ENCODE measurements at regions of chr6 and their contacts with region 1.

Region 1: DNA sequence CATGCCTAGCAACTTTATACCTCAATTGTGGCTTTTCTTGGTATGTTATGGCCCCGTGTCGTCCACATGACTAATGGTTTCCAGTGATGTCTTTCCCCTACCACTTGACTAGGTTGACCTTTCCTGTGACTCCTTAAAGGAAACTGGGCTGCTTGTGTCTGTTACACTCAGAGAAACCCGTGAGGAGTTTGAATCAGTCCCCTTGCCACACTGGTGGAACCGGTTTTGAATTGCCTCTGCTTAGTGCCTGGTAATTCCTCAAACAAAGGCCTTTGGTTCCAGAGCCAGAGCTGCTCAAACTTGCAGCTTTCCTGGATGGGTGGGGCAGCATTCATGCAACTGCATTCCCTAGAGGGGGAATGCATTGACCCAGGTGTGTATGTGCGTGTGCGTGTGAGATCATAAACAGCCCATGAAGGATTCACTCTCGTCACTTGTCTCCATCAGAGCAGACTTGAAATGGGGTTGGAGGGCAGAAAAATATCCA is 22.0 kb downstream of the ECT2L start:
- DNase-seq: no peak
- ATAC-seq: peak in 2 of 8 donors; percentile 27 to 43
- H3K4me3 ChIP-seq: no peak overlapping the region
- H3K27ac ChIP-seq: no peak overlapping the region
- H3K4me1 ChIP-seq: peaks cover 0 to 17% (median 0%) of the 10 kb centered on the region in 9 donors
- H3K27me3 ChIP-seq: no peaks in the 10 kb centered on the region
- CTCF ChIP-seq: no peak

Region 2: GRCh38 chr6:138863321-138863720 is 45.5 kb after region 1 on chr6:
- intact Hi-C with region 1: loop called in 1 of 10 experiments (anchors 1 kb)
- DNase-seq: peak; percentile 13 to 41
- ATAC-seq: peak; percentile 72 to 95 (median 84)
- H3K4me3 ChIP-seq: no peak overlapping the region
- H3K27ac ChIP-seq: peak overlapping the region; percentile 60 to 90 (median 78)
- H3K4me1 ChIP-seq: peaks cover 0 to 25% (median 13%) of the 10 kb centered on the region in 9 donors
- H3K27me3 ChIP-seq: no peaks in the 10 kb centered on the region
- CTCF ChIP-seq: no peak

Region 3: GRCh38 chr6:138987640-138988468 is 170.0 kb after region 1 on chr6 and contains the start of gene REPS1:
- intact Hi-C with region 1: loop called in 9 of 10 experiments (anchors 1 to 5 kb)
- DNase-seq: peak; percentile 92 to 93
- ATAC-seq: peak; percentile 98
- H3K4me3 ChIP-seq: peak within 1 kb of the TSS; percentile 64 to 97 (median 92)
- H3K27ac ChIP-seq: peak within 1 kb of the TSS; percentile 79 to 97 (median 94)
- H3K4me1 ChIP-seq: peaks cover 0 to 49% (median 38%) of the 10 kb centered on the region in 9 donors
- H3K27me3 ChIP-seq: no peaks in the 10 kb centered on the region
- CTCF ChIP-seq: peak; percentile 97 to 100 (median 99)
- total RNA-seq, gene REPS1: 30.2 to 43.9 (median 39.4) TPM

Region 4: DNA sequence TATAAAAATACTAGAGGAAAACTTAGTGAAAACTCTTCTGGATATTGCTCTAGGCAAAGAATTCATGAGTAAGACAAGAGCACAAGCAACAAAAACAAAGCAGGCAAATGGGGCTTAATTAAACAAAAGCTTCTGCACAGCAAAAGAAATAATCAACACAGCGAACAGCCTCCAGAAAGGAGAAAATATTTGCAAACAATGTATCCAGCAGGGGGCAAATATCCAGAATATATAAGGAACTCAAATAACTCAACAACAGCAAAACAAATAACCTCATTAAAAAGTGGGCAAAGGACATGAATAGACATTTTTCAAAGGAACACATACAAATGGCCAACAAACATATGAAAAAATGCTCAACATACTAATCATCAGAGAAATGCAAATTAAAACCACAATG is 299.9 kb after region 1 on chr6:
- intact Hi-C with region 1: loop called in 4 of 10 experiments (anchors 5 to 10 kb)
- DNase-seq: no peak
- ATAC-seq: no peak
- H3K4me3 ChIP-seq: no peak overlapping the region
- H3K27ac ChIP-seq: no peak overlapping the region
- H3K4me1 ChIP-seq: no peaks in the 10 kb centered on the region
- H3K27me3 ChIP-seq: no peaks in the 10 kb centered on the region
- CTCF ChIP-seq: no peak

Region 5: GRCh38 chr6:139369568-139370282 is 551.9 kb after region 1 on chr6:
- intact Hi-C with region 1: loop called in 9 of 10 experiments (anchors 2 to 10 kb)
- DNase-seq: no peak
- ATAC-seq: no peak
- H3K4me3 ChIP-seq: peak overlapping the region in 7 of 10 donors; percentile 0 to 97 (median 79)
- H3K27ac ChIP-seq: peak overlapping the region; percentile 38 to 99 (median 98)
- H3K4me1 ChIP-seq: peaks cover 0 to 48% (median 41%) of the 10 kb centered on the region in 9 donors
- H3K27me3 ChIP-seq: no peaks in the 10 kb centered on the region
- CTCF ChIP-seq: peak; percentile 60 to 83 (median 76)